Activated T-helper 1 cell treated with anti-CD3 and anti-CD28 coated beads, Interleukin-12 subunit alpha, Interleukin-12 subunit beta, Interleukin-2, Interleukin-4 antibody, amounts not matched to agents 30 ng/mL and 10 ng/mL and 1 ng/mL, durations not matched to agents 14 hours and 24 hours and 36 hours (primary cell): ENCODE measurements at regions of chr5 and their contacts with region 1.

Region 1: DNA sequence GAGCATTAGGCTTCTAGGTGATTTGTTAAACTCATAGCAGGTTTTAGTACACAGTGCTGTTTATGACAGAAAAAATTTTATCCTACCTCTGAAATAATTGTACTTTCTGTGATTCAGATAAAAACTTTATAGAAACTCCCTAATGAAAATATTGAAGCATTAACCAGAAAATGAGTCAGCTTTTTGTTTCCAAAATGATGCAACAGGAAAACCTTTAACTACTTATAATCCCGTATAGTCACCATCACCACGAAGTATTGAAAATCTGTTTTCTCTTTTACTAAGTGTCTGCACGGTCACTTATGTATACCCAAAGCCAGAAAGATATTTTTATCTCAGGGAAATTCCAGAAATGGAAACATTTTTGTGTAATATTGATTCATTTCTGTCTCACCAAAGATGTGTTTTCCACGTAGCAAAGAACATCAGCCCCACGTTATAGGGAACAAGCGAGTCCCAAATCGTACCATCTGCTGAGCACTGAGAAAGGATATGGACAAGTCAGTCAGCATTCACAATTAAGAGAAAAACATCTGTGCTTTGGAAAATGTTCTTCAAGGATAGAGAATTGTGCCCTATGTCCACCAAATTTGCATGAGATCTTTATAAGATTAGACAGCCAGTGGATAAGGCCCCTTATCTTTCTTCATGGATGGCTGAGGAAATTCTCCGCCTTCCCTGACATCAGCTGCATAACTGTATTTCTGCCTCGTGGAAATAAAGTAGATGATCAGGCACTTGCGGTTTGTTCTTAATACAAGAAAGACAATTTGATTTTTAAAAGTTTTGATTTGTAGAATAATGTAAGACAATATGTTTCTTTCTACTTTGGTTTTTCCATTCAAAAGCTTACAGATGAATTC is 41.9 kb downstream of the TNFAIP8 start:
- DNase-seq: no peak
- H3K4me3 Mint-ChIP-seq: peak overlapping the region; percentile 57
- H3K27ac Mint-ChIP-seq: peak overlapping the region; percentile 91
- H3K4me1 Mint-ChIP-seq: peaks cover 67% of the 10 kb centered on the region
- H3K27me3 Mint-ChIP-seq: no peaks in the 10 kb centered on the region

Region 2: GRCh38 chr5:119070828-119071572 is 326.7 kb before region 1 on chr5 and contains the start of gene DMXL1:
- intact Hi-C with region 1: loop called (anchors 2 kb)
- DNase-seq: peak; percentile 96
- H3K4me3 Mint-ChIP-seq: peak within 1 kb of the TSS; percentile 94
- H3K27ac Mint-ChIP-seq: peak within 1 kb of the TSS; percentile 98
- H3K4me1 Mint-ChIP-seq: peaks cover 36% of the 10 kb centered on the region
- H3K27me3 Mint-ChIP-seq: no peaks in the 10 kb centered on the region
- total RNA-seq, gene DMXL1: 26.7 and 28.2 TPM in 2 replicates

Region 3: DNA sequence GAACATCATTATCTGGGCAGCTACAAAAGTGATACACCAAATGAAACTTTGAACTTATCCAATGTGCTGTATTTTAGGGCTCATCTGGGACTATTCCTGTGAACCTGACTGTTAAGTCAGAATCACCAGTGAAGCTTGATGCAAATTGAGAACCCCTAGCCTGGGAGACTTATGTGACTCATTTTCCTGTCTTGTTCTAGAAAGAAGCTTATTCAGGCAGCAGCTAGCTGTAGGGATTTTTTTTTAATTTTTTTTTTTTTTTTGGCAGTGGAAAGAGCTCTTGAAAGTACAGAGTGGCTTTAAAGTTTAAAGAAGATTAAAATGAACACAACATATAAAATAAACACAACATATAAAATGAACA is 123.0 kb before region 1 on chr5:
- intact Hi-C with region 1: loop called (anchors 1 kb)
- DNase-seq: no peak
- H3K4me3 Mint-ChIP-seq: peak overlapping the region; percentile 99
- H3K27ac Mint-ChIP-seq: peak overlapping the region; percentile 95
- H3K4me1 Mint-ChIP-seq: peaks cover 98% of the 10 kb centered on the region
- H3K27me3 Mint-ChIP-seq: no peaks in the 10 kb centered on the region

Region 4: DNA sequence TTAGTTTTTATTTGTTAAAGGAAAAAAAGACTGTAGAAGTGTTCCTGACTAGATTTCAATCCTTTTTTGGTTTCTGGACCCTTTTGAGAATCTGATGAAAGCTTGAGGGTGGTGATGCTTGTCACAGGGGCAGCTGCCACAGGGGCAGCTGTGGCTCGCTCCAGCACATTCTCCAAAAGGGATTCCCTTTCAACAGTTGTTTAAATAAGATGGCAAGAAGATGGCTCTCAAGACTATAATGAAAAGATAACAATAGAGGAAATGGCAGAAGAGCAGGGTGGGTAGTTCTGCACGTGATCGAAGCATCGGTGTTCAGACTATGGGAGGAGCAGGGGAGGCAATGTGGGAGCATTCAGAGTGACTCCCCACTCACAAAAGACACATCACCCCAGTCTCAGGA is 88.4 kb before region 1 on chr5:
- intact Hi-C with region 1: loop called (anchors 1 kb)
- DNase-seq: no peak
- H3K4me3 Mint-ChIP-seq: peak overlapping the region; percentile 82
- H3K27ac Mint-ChIP-seq: peak overlapping the region; percentile 96
- H3K4me1 Mint-ChIP-seq: peaks cover 92% of the 10 kb centered on the region
- H3K27me3 Mint-ChIP-seq: no peaks in the 10 kb centered on the region

Region 5: DNA sequence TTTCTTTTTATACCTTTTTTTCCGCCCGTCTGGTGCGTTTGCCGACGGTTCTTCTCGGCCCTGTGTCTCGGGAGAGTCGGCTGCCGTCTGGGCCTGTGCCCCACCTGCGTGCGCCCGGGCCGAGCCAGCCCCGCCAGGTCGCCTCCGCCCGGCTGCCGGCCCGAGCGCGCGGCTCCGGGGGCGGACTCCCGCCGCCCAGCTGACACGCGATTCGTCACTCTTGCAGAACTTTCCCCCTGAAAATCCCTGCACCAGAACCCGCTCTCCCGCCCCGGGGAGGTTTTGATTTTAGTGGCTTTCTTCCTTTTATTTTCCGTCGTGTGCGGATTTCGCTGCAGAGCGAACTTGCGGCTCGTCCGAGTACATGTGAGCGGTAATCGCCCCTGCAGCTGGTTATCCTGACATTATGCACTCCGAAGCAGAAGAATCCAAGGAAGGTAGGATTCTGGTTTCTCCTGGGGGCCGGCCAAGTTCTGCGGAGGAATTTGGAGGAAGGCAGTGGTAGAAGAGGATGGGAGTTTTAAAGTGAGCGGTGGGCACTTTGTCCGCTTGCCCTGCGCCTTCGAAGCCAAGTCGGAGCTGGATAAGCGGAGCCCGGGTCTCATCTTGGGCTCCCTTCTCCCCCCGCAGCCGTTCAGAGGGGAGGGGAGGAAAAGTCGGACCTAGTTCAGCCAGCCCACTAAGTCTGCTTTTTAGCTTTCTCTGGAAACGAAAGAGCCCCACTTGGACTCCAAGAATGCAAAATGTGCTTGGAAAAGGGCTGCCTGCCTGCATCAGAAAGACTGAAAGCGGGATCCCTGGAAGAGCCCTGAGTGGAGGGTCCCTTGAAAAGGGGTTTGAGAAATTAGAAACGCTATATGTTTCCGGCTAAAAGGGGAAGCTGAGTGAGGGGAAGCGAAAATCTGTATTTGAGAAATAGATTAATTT is 41.8 kb before region 1 on chr5 and contains the start of gene TNFAIP8:
- intact Hi-C with region 1: loop called (anchors 1 kb)
- DNase-seq: peak; percentile 64
- H3K4me3 Mint-ChIP-seq: peak within 1 kb of the TSS; percentile 95
- H3K27ac Mint-ChIP-seq: peak within 1 kb of the TSS; percentile 91
- H3K4me1 Mint-ChIP-seq: peaks cover 74% of the 10 kb centered on the region
- H3K27me3 Mint-ChIP-seq: no peaks in the 10 kb centered on the region
- total RNA-seq, gene TNFAIP8: 214 and 219 TPM in 2 replicates

Region 6: DNA sequence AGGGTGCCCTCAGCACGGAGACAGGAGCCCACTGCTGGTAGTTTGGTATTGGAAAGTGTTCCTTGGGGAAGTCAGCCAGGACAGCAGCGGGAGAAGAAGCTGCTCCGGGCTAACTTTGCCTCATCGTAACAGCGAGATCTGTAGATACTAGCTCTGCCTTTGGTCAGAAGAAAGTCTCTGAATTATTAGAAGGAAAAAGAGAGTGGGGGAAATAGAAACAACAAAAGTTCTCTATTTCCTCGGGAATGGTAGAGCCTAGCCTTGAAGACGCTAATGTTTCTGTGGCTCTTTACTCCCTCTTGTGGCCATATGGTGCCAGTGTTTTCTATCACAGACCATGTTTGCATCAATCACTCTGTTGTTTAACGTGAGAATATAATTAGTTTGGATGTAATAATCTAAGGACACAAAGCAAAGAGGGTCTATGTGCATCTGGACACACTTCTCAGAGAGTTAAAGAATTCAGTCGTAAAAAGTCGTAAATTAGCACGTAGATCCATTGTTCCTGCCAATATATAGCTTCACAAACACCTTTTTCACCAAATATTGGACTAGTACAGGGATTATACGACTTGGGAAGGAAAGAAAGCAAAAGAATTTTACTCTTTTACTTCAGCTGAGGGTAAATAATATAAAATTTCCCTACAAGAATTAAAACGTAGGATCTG is 14.3 kb after region 1 on chr5:
- intact Hi-C with region 1: loop called (anchors 1 kb)
- DNase-seq: peak; percentile 36
- H3K4me3 Mint-ChIP-seq: peak overlapping the region; percentile 84
- H3K27ac Mint-ChIP-seq: peak overlapping the region; percentile 38
- H3K4me1 Mint-ChIP-seq: peaks cover 35% of the 10 kb centered on the region
- H3K27me3 Mint-ChIP-seq: peaks cover 4% of the 10 kb centered on the region